ENCODE measurements at regions of chr11 and their contacts with region 1.

Region 1: DNA sequence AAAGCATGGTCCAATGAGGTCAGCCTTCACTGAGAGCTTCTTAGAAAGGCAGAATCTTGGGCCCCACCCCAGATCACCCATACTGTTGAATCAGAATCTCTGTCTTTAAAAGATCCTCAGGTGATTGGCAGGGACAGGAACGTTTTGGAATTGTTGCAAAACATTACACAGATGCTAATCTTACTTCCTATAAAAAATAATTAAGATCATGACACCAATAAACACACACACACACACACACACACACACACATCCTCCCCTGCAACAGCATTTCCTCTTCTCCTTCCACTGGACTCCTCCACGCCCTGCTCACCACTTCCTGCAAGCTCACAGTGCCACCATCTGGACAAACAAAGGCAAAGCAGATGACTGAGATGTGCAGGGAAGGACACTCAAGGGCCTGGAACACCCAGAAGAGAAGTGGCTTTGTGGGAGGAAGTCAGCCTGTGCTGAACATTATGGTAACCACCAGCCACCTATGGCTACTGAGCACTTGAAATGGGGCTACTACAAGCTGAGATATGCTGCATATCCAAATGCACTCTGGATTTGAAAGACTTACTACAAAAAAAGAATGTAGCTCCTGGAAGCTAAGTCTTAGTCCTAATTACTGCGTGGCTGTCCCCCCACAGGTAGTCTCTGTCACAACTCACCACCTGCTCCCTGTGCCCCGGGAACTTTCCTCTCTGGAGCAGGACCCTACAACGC is 65.6 kb downstream of the BTG4 start:
- DNase-seq: peak; percentile 89
- CTCF ChIP-seq: peak; percentile 93

Region 2: DNA sequence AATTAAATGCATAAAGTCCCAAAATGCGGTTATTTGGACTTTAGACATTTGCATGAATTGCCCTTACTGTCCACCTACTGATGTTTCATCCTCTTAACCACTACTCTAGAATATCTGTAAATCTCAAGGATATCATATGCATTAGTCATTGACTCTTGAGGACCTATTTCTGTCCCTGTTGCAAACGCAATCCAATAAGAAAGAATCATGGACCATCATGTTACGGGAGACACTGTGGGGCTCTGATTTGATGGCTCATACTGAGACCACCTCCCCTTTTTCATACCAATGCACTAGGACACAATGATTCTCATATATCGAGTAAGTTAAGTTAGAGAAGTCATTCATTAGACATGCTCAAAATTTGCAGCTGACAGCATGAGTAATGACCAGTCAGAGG is 186.7 kb before region 1 on chr11:
- CTCF ChIA-PET with region 1: interaction called, 10 read pairs
- POLR2A ChIA-PET with region 1: no interaction called
- DNase-seq: no peak
- CTCF ChIP-seq: no peak

Region 3: DNA sequence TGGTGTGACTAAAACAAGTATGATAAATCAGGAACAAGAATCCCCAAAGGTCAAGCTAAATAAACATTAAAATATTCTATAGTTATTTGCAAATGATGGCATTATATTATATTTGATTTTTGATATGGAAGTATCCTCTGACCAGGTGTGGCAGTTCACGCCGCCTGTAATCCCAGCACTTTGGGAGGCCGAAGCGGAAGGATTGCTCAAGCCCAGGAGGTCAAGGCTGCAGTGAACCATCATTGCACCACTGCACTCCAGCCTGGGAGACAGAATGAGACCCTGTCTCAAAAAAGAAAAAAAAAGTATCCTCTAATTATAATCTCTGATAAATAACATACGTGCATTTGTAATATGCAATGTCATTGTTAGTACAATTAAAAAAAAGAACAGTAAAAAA is 154.8 kb before region 1 on chr11:
- CTCF ChIA-PET with region 1: interaction called, 122 read pairs
- POLR2A ChIA-PET with region 1: no interaction called
- DNase-seq: no peak
- CTCF ChIP-seq: no peak

Region 4: DNA sequence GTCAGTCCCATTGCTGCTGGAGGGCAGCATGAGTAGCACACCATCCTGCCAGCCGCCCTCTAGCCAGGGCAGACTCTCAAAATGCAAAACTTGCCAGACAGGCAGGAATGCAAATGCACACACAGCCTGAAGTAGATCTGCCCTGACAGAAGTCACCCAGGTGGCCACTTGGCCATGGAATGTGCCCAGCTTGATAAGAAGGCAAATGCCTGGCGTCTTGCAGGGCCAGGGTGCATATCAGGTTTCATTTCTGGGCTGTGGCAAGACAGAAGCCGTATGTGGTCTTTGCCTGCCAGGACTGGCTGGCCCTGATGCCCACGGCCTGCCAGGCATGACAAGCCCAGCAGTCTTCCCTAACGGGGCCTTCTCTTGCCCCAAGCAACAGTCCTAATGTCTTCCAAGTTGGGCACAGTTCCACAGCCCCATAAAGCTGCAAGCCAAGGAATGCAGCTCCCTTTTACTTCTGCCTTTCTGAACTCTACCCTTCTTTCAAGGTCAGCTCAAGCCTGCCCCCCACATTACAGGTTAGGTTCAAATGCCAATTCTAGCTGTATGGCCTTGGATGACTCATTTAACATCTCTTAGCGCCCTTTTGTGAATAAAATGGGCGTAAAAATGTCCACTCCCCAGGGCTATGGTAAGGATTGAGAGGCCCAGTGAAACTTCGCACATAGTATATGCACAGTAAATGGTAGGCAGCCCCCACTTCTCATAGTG is 118.5 kb before region 1 on chr11:
- CTCF ChIA-PET with region 1: interaction called, 11 read pairs
- POLR2A ChIA-PET with region 1: no interaction called
- DNase-seq: no peak
- CTCF ChIP-seq: no peak

Region 5: DNA sequence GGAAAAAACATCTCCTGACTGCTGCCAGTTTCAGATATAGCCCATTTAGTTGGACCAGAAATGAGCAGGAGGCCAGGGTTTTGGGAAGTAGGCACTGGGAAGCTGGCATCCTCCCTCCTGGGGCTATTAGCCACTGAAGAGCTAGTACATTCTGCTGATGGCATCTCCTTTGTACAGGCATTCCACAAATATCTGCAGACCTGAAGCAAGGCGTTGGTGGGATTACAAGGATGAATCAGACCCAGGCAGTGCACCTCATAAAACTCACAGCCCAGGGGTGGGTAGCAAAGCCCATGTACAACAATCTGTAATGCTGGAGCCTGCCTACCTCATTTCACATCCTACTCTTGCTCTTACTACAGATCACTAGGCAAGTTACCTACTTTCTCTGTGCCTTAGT is 40.0 kb before region 1 on chr11:
- CTCF ChIA-PET with region 1: no interaction called
- POLR2A ChIA-PET with region 1: no interaction called
- DNase-seq: no peak
- CTCF ChIP-seq: no peak

Region 6: GRCh38 chr11:111460856-111461255 is 14.3 kb after region 1 on chr11:
- CTCF ChIA-PET with region 1: interaction called, 27 read pairs
- POLR2A ChIA-PET with region 1: no interaction called
- DNase-seq: no peak
- CTCF ChIP-seq: no peak

Measured in GM10248 (cell line).